ENCODE measurements at regions of chr17 and their contacts with region 1.

Region 1: GRCh38 chr17:14069251-14070021 is at the start of gene COX10:
- DNase-seq: peak; percentile 87
- ATAC-seq: peak; percentile 98
- H3K4me3 Mint-ChIP-seq: peak within 1 kb of the TSS; percentile 97
- H3K27ac Mint-ChIP-seq: peak within 1 kb of the TSS; percentile 90
- H3K4me1 Mint-ChIP-seq: peaks cover 33% of the 10 kb centered on the region
- H3K27me3 Mint-ChIP-seq: no peaks in the 10 kb centered on the region
- CTCF ChIP-seq: no peak
- total RNA-seq, gene COX10: 19.4 and 20.8 TPM in 2 replicates

Region 2: GRCh38 chr17:14351493-14351892 is 282.1 kb after region 1 on chr17:
- CTCF ChIA-PET with region 1: no interaction called
- POLR2A ChIA-PET with region 1: no interaction called
- intact Hi-C with region 1: loop called (anchors 5 kb)
- DNase-seq: no peak
- ATAC-seq: peak; percentile 97
- H3K4me3 Mint-ChIP-seq: peak overlapping the region; percentile 32
- H3K27ac Mint-ChIP-seq: peak overlapping the region; percentile 63
- H3K4me1 Mint-ChIP-seq: peaks cover 41% of the 10 kb centered on the region
- H3K27me3 Mint-ChIP-seq: peaks cover 21% of the 10 kb centered on the region
- CTCF ChIP-seq: no peak

Region 3: DNA sequence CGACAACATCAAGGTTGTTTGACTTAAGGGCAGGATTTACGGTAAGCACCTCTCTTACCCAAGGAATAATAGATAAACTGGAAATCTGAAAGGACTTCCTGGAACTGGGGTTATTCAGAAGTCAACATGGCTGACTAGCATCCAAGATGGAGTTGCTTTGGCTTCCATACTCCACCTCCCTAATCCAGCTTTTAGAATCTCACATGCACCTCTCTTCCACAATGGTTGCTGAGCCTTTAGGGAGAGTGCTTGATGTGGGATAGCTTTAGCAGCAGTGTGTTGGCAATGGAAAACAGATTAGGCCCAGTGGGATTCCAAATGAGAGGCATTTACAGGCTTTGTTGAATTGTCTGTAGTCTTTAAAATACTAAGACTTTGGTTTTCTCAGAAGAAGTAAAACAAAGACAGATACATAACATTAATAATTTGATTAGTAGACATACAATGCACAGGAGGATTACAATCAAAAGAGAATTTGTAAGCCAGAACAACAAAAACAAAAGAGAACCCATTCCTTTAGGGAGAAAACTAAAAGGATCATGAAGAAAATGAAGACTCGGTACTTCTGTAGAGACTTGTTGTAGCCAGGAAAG is 453.5 kb after region 1 on chr17:
- CTCF ChIA-PET with region 1: no interaction called
- POLR2A ChIA-PET with region 1: no interaction called
- intact Hi-C with region 1: no loop called
- DNase-seq: no peak
- ATAC-seq: no peak
- H3K4me3 Mint-ChIP-seq: no peak overlapping the region
- H3K27ac Mint-ChIP-seq: no peak overlapping the region
- H3K4me1 Mint-ChIP-seq: no peaks in the 10 kb centered on the region
- H3K27me3 Mint-ChIP-seq: peaks cover 3% of the 10 kb centered on the region
- CTCF ChIP-seq: no peak